Activated CD4-positive, alpha-beta T cell treated with anti-CD3 and anti-CD28 coated beads for 36 hours (primary cell): ENCODE measurements at regions of chr6 and their contacts with region 1.

Region 1: DNA sequence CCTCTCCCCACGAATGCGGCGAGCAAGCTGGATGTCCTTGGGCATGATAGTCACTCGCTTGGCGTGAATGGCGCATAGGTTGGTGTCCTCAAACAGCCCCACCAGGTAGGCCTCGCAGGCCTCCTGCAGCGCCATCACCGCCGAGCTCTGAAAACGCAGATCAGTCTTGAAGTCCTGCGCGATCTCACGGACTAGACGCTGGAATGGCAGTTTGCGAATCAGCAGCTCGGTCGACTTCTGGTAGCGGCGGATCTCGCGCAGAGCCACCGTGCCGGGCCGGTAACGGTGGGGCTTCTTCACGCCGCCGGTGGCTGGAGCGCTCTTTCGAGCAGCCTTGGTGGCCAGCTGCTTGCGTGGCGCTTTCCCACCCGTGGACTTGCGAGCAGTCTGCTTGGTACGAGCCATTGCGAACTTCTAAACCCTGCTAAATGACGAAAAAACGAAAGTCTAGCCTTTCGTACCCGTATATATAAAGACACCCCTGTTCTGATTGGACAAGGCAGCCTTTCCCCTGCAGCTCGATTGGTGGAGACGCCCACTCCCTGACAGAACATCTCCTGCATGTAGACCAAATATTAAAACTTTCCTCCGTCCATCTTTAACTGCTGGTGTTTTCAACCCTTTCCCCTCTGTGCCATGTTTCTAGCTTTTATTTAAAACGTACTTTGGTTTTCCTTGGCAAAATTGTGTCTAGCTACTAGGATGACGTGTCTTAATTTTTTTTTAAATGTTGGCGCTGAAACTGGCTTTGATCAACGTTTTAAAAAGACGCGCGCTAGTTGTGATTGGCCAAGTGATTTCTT is 109.8 kb downstream of the HFE start:
- DNase-seq: peak; percentile 86
- ATAC-seq: peak; percentile 43
- H3K4me3 Mint-ChIP-seq: peak overlapping the region; percentile 98
- H3K27ac Mint-ChIP-seq: peak overlapping the region; percentile 99
- H3K4me1 Mint-ChIP-seq: peaks cover 28% of the 10 kb centered on the region
- H3K27me3 Mint-ChIP-seq: no peaks in the 10 kb centered on the region

Region 2: DNA sequence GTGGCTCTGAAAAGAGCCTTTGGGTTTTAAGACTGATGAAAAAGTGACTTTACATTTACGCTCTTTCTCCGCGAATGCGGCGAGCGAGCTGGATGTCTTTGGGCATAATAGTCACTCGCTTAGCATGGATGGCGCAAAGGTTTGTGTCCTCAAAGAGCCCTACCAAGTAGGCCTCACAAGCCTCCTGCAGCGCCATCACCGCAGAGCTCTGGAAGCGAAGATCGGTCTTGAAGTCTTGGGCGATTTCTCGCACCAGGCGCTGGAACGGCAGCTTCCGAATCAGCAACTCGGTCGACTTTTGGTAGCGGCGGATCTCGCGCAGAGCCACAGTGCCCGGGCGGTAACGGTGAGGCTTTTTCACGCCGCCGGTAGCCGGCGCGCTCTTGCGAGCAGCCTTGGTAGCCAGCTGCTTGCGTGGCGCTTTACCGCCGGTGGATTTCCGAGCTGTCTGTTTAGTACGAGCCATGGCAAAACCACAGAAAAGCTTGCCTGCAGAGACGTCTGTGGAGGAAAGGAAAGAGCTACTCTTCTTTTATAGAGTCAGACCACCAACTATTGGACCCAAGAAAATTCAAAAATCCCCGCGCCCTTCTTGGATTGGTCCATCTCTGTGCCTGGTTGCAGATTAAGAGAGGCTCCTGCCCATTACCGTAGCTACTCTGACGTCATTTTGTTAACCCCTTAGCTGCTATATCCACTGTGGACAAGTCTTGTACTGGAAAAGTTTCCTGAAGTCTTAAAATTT is 165.3 kb before region 1 on chr6:
- CTCF ChIA-PET with region 1: interaction called, 6 read pairs
- POLR2A ChIA-PET with region 1: interaction called, 22 read pairs
- intact Hi-C with region 1: loop called (anchors 2 kb)
- DNase-seq: peak; percentile 92
- ATAC-seq: peak; percentile 69
- H3K4me3 Mint-ChIP-seq: peak overlapping the region; percentile 81
- H3K27ac Mint-ChIP-seq: peak overlapping the region; percentile 98
- H3K4me1 Mint-ChIP-seq: peaks cover 50% of the 10 kb centered on the region
- H3K27me3 Mint-ChIP-seq: no peaks in the 10 kb centered on the region

Region 3: DNA sequence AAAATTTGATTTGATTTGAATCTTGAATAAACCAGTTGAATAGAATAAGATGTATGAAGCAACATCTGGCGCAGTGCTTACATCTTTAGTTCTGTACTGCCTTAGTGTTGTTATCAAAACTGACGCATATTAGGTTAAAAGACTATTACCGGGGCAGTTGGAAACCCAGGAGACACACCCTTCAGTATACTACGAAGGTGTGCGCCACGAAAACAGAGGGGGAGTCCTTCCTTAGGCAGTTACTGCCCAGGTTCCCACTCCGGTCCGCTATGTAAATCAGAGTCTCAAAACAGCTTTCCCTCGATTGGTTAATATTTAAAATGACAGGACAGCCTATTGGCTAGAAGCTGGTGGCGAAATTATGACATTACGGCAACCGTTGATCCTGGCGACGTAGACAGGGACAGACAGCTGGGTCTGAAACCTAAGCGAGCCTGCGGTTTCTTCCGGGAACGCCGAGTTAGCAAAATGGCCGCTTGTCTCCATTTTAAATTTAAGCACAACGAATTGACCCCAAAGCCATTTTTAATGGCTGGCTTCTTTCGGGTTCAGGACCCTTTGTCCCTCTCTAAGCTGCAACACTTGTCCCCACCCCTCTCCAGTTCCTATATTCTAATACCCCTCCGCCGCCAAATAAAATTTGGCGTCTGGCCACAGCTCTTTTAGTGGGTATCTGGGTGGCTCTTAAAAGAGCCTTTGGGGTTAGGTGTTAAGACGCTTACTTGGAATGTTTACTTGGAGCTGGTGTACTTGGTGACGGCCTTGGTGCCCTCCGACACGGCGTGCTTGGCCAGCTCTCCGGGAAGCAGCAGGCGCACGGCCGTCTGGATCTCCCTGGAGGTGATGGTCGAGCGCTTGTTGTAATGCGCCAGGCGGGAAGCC is 74.0 kb before region 1 on chr6:
- CTCF ChIA-PET with region 1: interaction called, 5 read pairs
- POLR2A ChIA-PET with region 1: interaction called, 176 read pairs
- intact Hi-C with region 1: loop called (anchors 1 kb)
- DNase-seq: peak; percentile 95
- ATAC-seq: peak; percentile 57
- H3K4me3 Mint-ChIP-seq: peak overlapping the region; percentile 82
- H3K27ac Mint-ChIP-seq: peak overlapping the region; percentile 100
- H3K4me1 Mint-ChIP-seq: peaks cover 34% of the 10 kb centered on the region
- H3K27me3 Mint-ChIP-seq: peaks cover 3% of the 10 kb centered on the region

Region 4: DNA sequence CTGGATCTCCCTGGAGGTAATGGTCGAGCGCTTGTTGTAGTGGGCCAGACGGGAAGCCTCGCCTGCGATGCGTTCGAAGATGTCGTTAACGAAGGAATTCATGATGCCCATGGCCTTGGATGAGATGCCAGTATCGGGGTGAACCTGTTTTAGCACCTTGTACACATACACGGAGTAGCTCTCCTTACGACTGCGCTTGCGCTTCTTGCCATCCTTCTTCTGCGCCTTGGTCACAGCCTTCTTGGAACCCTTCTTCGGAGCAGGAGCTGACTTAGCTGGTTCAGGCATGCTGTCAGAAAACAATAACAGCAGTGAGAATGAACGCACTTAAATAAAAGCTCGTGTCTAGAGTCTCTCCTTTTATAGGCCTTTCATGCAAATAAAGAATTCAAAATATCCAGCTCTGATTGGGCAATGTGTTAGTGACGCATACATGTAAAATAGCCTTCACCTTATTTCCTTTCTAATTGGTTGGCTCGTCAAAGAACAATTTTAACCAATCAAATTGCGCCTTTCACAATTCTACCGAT is 19.4 kb after region 1 on chr6:
- CTCF ChIA-PET with region 1: interaction called, 30 read pairs
- POLR2A ChIA-PET with region 1: interaction called, 246 read pairs
- intact Hi-C with region 1: loop called (anchors 1 kb)
- DNase-seq: peak; percentile 88
- ATAC-seq: peak; percentile 76
- H3K4me3 Mint-ChIP-seq: no peak overlapping the region
- H3K27ac Mint-ChIP-seq: no peak overlapping the region
- H3K4me1 Mint-ChIP-seq: peaks cover 2% of the 10 kb centered on the region
- H3K27me3 Mint-ChIP-seq: no peaks in the 10 kb centered on the region

Region 5: GRCh38 chr6:26249957-26250697 is 53.1 kb after region 1 on chr6:
- CTCF ChIA-PET with region 1: interaction called, 8 read pairs
- POLR2A ChIA-PET with region 1: interaction called, 62 read pairs
- intact Hi-C with region 1: loop called in 1 of 2 experiments (anchors 2 kb)
- DNase-seq: peak; percentile 85
- ATAC-seq: peak; percentile 63
- H3K4me3 Mint-ChIP-seq: peak overlapping the region; percentile 86
- H3K27ac Mint-ChIP-seq: peak overlapping the region; percentile 97
- H3K4me1 Mint-ChIP-seq: peaks cover 14% of the 10 kb centered on the region
- H3K27me3 Mint-ChIP-seq: no peaks in the 10 kb centered on the region

Region 6: DNA sequence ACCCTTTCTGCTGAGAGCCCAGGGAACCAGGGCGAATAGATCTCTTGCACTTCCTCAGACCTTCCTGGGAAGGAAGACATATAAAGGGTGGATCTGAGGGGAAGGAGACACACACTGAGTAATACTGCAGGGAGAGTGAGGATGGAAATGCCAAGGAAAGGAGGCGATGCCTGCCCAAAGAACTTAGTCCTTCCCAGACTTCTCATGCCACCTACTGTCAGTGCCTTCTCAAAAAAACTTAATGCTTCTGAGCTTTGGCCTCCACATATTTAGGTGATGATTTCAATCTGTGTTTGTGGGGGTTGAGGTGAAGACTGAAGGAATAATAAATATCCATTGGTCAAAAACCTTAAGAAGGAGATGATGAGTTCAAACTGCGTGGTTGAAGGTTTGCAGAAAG is 214.7 kb after region 1 on chr6:
- CTCF ChIA-PET with region 1: no interaction called
- POLR2A ChIA-PET with region 1: no interaction called
- intact Hi-C with region 1: no loop called
- DNase-seq: no peak
- ATAC-seq: no peak
- H3K4me3 Mint-ChIP-seq: no peak overlapping the region
- H3K27ac Mint-ChIP-seq: no peak overlapping the region
- H3K4me1 Mint-ChIP-seq: peaks cover 16% of the 10 kb centered on the region
- H3K27me3 Mint-ChIP-seq: no peaks in the 10 kb centered on the region

Region 7: GRCh38 chr6:27146706-27147505 is 949.9 kb after region 1 on chr6:
- CTCF ChIA-PET with region 1: no interaction called
- POLR2A ChIA-PET with region 1: interaction called, 36 read pairs
- intact Hi-C with region 1: loop called in 1 of 2 experiments (anchors 2 kb)
- DNase-seq: peak; percentile 89
- ATAC-seq: peak; percentile 69
- H3K4me3 Mint-ChIP-seq: no peak overlapping the region
- H3K27ac Mint-ChIP-seq: no peak overlapping the region
- H3K4me1 Mint-ChIP-seq: peaks cover 11% of the 10 kb centered on the region
- H3K27me3 Mint-ChIP-seq: no peaks in the 10 kb centered on the region